ENCODE measurements at regions of chr1 and their contacts with region 1.

Region 1: DNA sequence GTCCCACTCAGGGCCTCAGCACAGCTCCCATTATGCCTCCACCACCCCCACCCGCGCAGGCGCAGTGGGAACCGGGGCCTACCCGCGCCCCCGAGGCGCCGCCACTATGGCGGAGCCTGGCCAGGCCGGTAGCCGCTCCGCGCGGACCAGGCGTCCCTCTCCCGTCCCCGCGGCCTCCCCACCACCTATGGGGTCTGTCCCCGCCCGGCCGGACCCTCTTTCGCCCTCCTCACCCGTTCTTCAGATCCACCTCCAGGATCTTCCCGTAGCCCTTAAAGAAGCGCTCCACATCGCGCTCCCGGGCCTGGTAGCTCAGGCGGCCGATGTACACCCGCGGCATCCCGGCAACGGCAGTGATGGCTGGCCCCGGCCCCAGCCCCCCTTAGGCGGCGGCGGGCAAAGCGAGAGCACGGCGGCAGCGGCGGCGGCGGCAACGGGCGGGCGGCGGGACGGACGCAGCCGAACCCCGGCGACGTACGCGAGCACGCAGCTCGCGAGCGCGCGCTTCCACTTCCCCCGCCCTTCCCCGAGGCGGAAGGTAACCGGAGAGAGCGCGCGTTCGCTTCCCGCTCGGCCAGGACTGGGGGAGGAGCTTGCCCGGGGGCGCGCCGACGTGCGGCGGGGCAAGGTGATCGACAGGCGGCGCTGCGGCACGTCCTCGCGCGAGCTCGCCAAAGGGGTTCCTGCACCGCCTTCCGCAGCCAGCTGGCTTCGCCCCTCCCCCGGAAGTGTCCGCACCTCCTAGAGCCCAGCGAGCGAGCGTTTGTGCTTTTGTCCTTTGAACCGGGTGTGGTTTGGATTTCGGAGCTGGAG is at the start of gene SRSF4:
- DNase-seq: peak; percentile 99
- ATAC-seq: peak; percentile 95
- H3K4me3 Mint-ChIP-seq: peak within 1 kb of the TSS; percentile 95
- H3K27ac Mint-ChIP-seq: peak within 1 kb of the TSS; percentile 92
- H3K4me1 Mint-ChIP-seq: peaks cover 45% of the 10 kb centered on the region
- H3K27me3 Mint-ChIP-seq: no peaks in the 10 kb centered on the region
- CTCF ChIP-seq: no peak
- total RNA-seq, gene SRSF4: 80.3 and 92.6 TPM in 2 replicates

Region 2: DNA sequence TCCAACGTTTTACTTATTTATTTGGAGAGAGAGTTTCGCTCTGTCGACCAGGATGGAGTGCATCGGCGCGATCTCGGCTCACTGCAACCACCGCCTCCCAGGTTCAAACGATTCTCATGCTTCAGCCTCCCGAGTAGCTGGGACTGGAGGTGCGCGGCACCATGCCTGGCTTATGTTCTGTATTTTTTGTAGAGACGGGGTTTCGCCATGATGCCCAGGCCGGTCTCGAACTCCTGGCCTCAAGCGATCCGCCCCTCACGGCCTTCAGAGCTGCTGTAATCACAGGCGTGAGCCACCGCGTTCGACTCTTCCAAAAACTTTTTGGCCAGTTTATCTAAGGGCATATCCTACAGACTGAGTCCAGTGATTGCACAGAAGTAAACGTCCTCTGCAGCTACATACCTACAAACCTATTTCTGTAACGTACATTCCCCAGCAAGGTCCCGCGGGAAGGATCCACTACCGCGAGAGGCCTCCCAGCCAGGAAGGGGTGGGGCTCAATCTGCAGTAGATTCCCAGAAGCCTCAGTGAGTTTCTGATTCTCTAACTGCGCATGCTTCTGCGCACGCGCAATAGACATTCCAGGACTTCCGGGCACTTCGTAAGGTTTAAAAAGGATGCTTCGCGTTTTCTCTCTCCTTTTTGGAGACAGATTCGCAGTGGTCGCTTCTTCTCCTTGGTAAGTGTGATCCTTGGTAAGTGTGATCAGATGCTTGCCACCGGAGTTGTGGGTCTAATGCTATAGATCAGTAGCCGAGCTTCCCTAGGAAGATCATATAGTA is 676.0 kb before region 1 on chr1 and contains the start of gene RCC1:
- CTCF ChIA-PET with region 1: no interaction called
- POLR2A ChIA-PET with region 1: interaction called, 3 read pairs
- intact Hi-C with region 1: loop called (anchors 2 kb)
- DNase-seq: peak; percentile 82
- ATAC-seq: peak; percentile 87
- H3K4me3 Mint-ChIP-seq: peak within 1 kb of the TSS; percentile 98
- H3K27ac Mint-ChIP-seq: peak within 1 kb of the TSS; percentile 98
- H3K4me1 Mint-ChIP-seq: peaks cover 38% of the 10 kb centered on the region
- H3K27me3 Mint-ChIP-seq: no peaks in the 10 kb centered on the region
- CTCF ChIP-seq: no peak
- total RNA-seq, gene RCC1: 45.2 and 47.5 TPM in 2 replicates

Region 3: DNA sequence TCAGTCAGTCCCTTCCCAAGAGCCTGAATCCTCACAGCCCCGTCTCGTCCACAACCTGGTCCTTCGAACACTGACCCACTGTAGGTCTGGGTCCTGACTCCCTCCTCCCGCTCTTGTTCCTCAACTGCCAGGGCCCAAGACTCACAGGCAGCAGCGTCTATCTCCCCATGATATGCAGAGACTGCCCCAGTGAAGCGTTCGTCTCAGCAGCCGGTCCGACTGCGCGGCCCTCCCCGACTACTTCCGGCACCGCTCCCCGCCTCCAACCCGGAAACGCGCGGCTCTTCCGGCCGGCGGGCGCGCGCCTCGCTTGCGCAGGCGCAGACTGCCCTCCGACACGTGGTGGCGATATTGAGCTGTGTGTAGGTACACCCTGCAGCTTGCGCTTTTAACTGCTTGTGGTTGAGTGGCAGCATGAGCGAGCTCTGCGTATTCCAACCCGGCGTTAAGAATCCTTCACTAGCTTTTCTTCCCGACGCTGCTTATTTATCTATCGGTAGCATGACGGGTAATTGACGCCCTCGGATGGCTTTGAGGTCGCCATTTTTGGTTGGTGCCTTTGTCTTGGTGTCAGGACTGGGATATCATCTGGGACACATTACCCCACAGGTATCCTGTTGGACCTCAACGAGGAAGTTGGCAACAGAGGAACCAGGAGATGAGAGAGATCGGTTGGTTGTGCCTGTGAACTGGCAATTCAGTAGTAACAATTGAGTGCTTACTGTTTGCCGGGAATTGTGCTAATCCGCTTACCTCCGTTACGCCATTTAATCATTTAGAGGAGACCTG is 538.6 kb before region 1 on chr1 and contains the start of gene TAF12:
- CTCF ChIA-PET with region 1: no interaction called
- POLR2A ChIA-PET with region 1: interaction called, 27 read pairs
- intact Hi-C with region 1: loop called (anchors 1 kb)
- DNase-seq: peak; percentile 78
- ATAC-seq: peak; percentile 80
- H3K4me3 Mint-ChIP-seq: peak within 1 kb of the TSS; percentile 96
- H3K27ac Mint-ChIP-seq: peak within 1 kb of the TSS; percentile 97
- H3K4me1 Mint-ChIP-seq: peaks cover 50% of the 10 kb centered on the region
- H3K27me3 Mint-ChIP-seq: no peaks in the 10 kb centered on the region
- CTCF ChIP-seq: no peak
- total RNA-seq, gene TAF12: 17.1 and 18.5 TPM in 2 replicates

Region 4: GRCh38 chr1:28886731-28887418 is 294.7 kb before region 1 on chr1:
- CTCF ChIA-PET with region 1: interaction called, 9 read pairs
- POLR2A ChIA-PET with region 1: interaction called, 13 read pairs
- intact Hi-C with region 1: loop called (anchors 1 kb)
- DNase-seq: peak; percentile 94
- ATAC-seq: peak; percentile 75
- H3K4me3 Mint-ChIP-seq: peak overlapping the region; percentile 88
- H3K27ac Mint-ChIP-seq: peak overlapping the region; percentile 91
- H3K4me1 Mint-ChIP-seq: peaks cover 58% of the 10 kb centered on the region
- H3K27me3 Mint-ChIP-seq: no peaks in the 10 kb centered on the region
- CTCF ChIP-seq: no peak

Region 5: DNA sequence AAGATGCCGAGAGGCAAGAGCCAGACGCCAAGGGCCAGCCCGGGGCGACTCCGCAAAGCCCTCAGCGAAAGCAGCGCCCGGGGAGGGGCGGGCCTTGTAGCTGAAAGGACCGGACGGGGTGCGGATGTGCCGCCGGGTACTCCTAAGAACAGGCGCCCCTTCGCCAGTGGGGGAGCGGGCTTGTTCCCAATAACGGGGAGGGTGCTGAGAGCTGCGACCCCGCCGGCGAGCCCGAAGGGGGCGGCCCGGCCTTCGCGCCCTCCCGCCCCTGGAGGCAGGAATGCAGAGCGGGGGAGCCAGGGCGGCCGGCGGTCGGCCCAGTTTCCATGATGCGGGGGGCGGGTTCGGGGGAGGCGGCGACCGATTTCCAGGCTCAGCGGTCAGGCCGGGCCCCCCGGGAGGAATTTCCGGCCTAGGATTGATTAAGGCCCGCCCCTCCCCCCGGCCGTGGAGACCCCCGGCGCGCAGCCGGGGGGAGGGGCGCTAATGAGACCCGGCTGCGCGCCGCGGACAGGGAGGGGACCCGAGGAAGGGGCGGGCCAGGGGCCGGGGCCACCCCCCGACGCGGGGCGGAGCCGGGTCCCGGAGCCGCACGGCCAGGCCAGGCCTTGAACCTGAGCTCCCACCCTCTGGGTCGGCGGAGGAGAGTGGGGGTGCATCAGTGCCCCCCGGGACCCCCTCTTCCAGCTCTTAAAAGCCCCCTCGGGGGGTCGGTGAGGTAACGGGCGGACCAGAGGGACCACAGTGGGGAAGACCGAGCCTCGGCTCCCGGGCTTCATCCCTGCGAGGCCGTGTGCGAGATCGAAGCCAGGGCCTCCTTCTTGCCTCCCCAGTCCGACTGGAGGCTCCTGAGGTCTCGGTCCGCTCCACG is 57.0 kb before region 1 on chr1:
- CTCF ChIA-PET with region 1: no interaction called
- POLR2A ChIA-PET with region 1: interaction called, 6 read pairs
- intact Hi-C with region 1: loop called (anchors 1 kb)
- DNase-seq: peak; percentile 56
- ATAC-seq: peak; percentile 49
- H3K4me3 Mint-ChIP-seq: peak overlapping the region; percentile 79
- H3K27ac Mint-ChIP-seq: no peak overlapping the region
- H3K4me1 Mint-ChIP-seq: peaks cover 19% of the 10 kb centered on the region
- H3K27me3 Mint-ChIP-seq: peaks cover 10% of the 10 kb centered on the region
- CTCF ChIP-seq: no peak

Region 6: DNA sequence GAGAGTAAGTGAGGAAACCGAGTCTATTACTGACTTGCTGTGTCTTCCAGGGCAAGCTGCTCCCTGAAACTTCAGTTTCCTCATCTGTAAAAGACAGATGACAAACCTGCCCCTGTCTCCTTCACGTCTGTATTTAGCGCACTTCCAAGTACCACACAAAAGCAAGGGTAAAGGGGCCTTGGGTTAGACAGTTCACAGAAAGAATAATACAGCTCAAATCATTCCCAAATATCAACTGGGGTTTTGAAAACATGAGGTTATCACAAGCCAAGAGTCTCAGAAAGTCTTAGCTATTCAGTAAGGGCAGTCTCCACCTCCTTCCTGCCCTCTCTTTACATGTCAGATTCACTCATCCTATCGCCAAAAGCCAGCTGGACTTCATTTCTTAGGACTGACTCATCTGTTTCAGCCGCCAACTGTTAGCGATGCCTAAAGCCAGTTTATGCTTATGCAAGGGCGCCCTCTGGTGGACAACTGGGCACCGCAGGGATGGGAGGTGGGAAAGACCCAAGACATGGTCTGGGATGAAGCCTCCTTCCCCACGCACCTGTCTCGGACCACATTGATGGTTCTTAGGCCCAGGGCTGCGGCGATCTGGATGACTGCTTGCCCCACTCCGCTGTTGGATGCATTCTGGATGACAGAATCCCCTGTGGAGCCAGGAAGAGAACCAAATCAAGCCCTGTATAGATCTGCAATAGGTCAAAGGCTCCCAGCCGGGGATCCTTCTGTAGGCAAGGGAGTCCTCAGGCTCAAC is 21.1 kb after region 1 on chr1:
- CTCF ChIA-PET with region 1: interaction called, 25 read pairs
- POLR2A ChIA-PET with region 1: interaction called, 8 read pairs
- intact Hi-C with region 1: loop called (anchors 1 kb)
- DNase-seq: peak; percentile 80
- ATAC-seq: peak; percentile 98
- H3K4me3 Mint-ChIP-seq: no peak overlapping the region
- H3K27ac Mint-ChIP-seq: no peak overlapping the region
- H3K4me1 Mint-ChIP-seq: peaks cover 3% of the 10 kb centered on the region
- H3K27me3 Mint-ChIP-seq: no peaks in the 10 kb centered on the region
- CTCF ChIP-seq: no peak

Region 7: GRCh38 chr1:29213055-29213454 is 31.4 kb after region 1 on chr1:
- CTCF ChIA-PET with region 1: no interaction called
- POLR2A ChIA-PET with region 1: no interaction called
- intact Hi-C with region 1: no loop called
- DNase-seq: no peak
- ATAC-seq: no peak
- H3K4me3 Mint-ChIP-seq: no peak overlapping the region
- H3K27ac Mint-ChIP-seq: no peak overlapping the region
- H3K4me1 Mint-ChIP-seq: peaks cover 14% of the 10 kb centered on the region
- H3K27me3 Mint-ChIP-seq: no peaks in the 10 kb centered on the region
- CTCF ChIP-seq: no peak

Region 8: DNA sequence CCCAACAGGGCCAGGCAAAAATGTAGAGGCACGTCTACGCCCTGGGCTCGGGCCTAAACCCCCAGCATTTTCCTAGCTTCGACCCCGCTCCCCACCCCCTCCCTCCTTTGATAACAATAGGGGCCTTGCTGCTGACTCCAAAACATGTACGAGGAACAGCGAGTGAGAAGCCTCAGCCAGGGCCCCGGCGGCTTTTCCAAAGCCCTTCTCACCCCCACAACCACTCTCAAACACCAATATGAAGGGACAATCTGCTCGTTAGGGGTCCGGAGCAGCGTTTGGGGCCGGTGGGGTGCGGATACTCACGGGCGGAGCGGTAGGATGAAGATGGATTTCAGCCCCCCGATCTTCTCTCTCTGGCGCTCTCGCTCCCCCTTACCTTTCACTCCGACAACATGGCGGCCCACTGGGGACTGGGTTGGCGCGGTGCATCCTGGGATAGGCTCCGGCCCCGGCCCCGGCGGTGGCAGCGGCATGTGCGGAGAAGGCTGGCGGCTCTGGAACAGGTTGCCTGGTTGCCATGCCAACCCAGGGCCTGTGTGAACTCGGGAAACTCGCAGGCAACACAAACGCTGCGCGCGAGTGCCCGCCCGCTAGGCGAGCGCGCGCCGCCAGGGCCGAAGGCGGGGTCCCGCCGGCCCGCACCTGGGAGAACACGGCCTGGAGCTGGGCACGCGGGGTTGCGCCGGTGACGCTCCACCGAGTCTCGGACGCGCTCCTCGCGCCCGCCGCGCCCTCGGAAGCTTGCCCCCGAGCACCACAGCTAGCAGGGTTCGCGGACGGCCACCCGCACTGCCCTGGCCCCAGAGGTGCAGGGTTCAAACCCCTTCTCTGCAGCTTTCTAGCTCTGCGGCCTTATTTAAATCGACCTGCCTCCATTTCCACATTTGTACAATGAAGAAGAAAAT is 1883.9 kb after region 1 on chr1 and contains the start of gene PUM1:
- CTCF ChIA-PET with region 1: no interaction called
- POLR2A ChIA-PET with region 1: no interaction called
- intact Hi-C with region 1: loop called (anchors 1 kb)
- DNase-seq: peak; percentile 97
- ATAC-seq: peak; percentile 94
- H3K4me3 Mint-ChIP-seq: peak within 1 kb of the TSS; percentile 99
- H3K27ac Mint-ChIP-seq: peak within 1 kb of the TSS; percentile 98
- H3K4me1 Mint-ChIP-seq: peaks cover 37% of the 10 kb centered on the region
- H3K27me3 Mint-ChIP-seq: no peaks in the 10 kb centered on the region
- CTCF ChIP-seq: no peak
- total RNA-seq, gene PUM1: 132 and 137 TPM in 2 replicates

Measured in activated B cell treated with CpG ODN at 0.5 μM for 24 hours (primary cell).